ENCODE measurements at regions of chr15 and their contacts with region 1.

Region 1: DNA sequence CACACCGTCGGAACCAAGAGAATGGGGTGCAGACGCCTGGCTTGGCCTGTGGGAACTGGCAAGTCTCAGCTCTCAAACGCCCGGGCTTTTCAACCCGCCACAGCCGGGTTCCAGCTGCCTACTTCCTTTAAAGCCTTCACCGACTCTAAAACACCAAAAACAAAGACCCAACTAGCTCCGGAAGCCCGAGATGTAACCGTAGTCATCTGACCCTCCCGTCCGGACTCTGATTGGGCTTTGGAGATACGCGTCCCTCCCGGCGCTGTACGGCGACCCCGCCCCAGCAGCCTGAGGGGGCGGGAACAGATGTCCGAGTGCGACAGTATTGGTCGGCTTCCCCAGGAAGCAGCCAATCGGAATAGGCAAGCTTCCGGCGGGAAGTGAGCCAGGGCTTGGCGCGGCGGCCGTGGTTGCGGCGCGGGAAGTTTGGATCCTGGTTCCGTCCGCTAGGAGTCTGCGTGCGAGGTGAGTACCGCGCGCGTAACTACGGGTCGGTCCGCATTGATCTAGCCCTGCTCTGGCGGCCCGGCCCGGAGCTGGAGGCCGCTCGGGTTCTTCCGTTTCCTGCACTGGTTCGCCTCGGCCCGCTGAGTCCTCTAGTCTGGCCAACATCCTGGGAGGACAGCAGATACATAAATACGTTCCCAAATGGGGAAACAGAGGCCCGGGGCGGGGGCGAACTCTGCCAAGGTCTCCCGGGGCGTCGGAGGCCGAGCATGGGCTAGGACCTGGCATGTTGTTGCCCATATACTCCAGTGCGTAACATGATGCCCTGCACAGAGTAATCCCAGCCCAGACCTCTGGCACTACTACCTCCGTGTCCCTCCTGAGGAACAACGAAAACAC is at the start of gene BLM:
- DNase-seq: peak; percentile 97
- ATAC-seq: peak; percentile 100
- H3K4me3 ChIP-seq: peak within 1 kb of the TSS; percentile 80
- H3K27ac ChIP-seq: peak within 1 kb of the TSS; percentile 97
- H3K4me1 ChIP-seq: peaks cover 12% of the 10 kb centered on the region
- H3K27me3 ChIP-seq: no peaks in the 10 kb centered on the region
- CTCF ChIP-seq: peak; percentile 45
- total RNA-seq, gene BLM: 1.5 TPM

Region 2: DNA sequence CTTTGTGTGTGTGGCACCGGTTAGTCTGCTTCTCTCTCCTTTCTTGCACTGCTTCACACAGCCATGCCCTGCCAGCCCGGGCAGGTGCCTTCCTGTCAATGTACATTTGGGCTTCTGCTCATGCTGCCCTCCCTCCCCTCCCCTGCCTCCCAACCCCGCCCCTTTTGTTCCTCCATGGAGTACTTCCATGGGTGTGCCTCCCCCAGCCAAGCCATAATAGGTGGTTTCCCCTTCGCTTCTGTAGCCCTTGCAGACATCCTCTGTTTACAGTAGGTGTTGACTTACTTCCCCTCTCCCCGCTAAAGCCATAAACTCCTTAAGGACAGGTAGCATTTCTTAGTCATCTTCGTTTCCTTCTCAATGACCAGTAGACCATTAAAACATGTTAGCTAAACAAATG is 219.3 kb before region 1 on chr15:
- intact Hi-C with region 1: no loop called
- DNase-seq: peak; percentile 66
- ATAC-seq: peak; percentile 88
- H3K4me3 ChIP-seq: no peak overlapping the region
- H3K27ac ChIP-seq: no peak overlapping the region
- H3K4me1 ChIP-seq: no peaks in the 10 kb centered on the region
- H3K27me3 ChIP-seq: no peaks in the 10 kb centered on the region
- CTCF ChIP-seq: no peak

Region 3: GRCh38 chr15:90571063-90571541 is 146.1 kb before region 1 on chr15:
- intact Hi-C with region 1: no loop called
- DNase-seq: no peak
- ATAC-seq: peak; percentile 94
- H3K4me3 ChIP-seq: no peak overlapping the region
- H3K27ac ChIP-seq: peak overlapping the region; percentile 43
- H3K4me1 ChIP-seq: peaks cover 16% of the 10 kb centered on the region
- H3K27me3 ChIP-seq: no peaks in the 10 kb centered on the region
- CTCF ChIP-seq: no peak

Region 4: GRCh38 chr15:90808517-90809235 is 91.5 kb after region 1 on chr15:
- intact Hi-C with region 1: no loop called
- DNase-seq: no peak
- ATAC-seq: peak; percentile 74
- H3K4me3 ChIP-seq: no peak overlapping the region
- H3K27ac ChIP-seq: no peak overlapping the region
- H3K4me1 ChIP-seq: no peaks in the 10 kb centered on the region
- H3K27me3 ChIP-seq: no peaks in the 10 kb centered on the region
- CTCF ChIP-seq: no peak

Region 5: GRCh38 chr15:90869601-90870353 is 152.6 kb after region 1 on chr15:
- intact Hi-C with region 1: loop called (anchors 10 kb)
- DNase-seq: peak; percentile 90
- ATAC-seq: peak; percentile 80
- H3K4me3 ChIP-seq: peak overlapping the region; percentile 85
- H3K27ac ChIP-seq: peak overlapping the region; percentile 96
- H3K4me1 ChIP-seq: peaks cover 56% of the 10 kb centered on the region
- H3K27me3 ChIP-seq: no peaks in the 10 kb centered on the region
- CTCF ChIP-seq: no peak